ENCODE measurements at regions of chr1 and their contacts with region 1.

Region 1: DNA sequence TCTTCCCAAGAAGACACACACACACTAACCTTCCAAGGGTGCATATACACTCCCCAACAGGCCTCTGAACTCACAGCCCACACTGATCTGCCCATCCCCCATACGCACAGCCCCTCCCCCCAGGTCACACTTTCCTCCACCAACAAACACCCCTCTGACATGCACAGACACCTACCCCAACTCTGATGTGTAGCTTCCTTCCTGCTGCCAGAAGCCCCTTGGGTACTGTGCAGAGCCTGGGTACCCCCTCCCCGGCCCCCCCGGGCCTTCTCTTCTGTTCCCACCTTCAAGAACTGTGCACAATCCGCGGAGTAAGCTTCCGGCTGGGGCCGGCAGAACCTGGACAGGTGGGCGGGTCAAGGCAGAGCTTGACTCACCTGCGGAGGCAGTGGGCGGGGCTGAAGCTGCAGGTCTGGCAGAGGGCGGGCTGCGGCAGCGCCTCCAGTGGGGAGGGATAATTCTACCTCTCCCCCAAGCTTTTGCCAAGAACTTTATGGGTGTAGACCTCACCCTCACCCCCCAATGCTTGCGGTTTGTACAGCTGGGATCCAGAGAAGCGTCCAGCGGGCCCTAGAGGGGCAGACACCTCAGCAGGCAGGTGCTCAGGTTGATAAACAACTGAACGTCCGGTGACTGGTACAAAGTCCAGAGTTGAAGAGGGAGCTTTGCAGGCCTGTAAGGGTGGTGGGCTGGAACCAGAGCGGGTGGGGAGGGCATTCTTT is at the start of gene C1orf210:
- DNase-seq: peak; percentile 71 to 93
- H3K4me3 ChIP-seq: peak within 1 kb of the TSS; percentile 41 to 64 (median 60)
- H3K27ac ChIP-seq: peak within 1 kb of the TSS; percentile 7; the same call in 1 of the 2 replicates
- H3K4me1 ChIP-seq: peaks cover 0 to 15% (median 12%) of the 10 kb centered on the region in 4 experiments; a peak in 6 of 7 replicates
- H3K27me3 ChIP-seq: no peaks in the 10 kb centered on the region; a peak in 1 of 7 replicates
- CTCF ChIP-seq: peak; percentile 58 to 71 (median 68)
- EP300 ChIP-seq: no peak
- POLR2A ChIP-seq: no peak; a peak in 1 of 3 replicates
- RAD21 ChIP-seq: peak; percentile 38 to 40; a peak in 2 of 4 replicates
- total RNA-seq, gene C1orf210: 10.6 and 12.0 TPM in 2 replicates

Region 2: GRCh38 chr1:43238085-43238484 is 47.3 kb before region 1 on chr1:
- CTCF ChIA-PET with region 1: interaction called, 14 read pairs
- POLR2A ChIA-PET with region 1: no interaction called
- DNase-seq: peak; percentile 36 to 79
- H3K4me3 ChIP-seq: no peak overlapping the region
- H3K27ac ChIP-seq: no peak overlapping the region
- H3K4me1 ChIP-seq: no peaks in the 10 kb centered on the region
- H3K27me3 ChIP-seq: no peaks in the 10 kb centered on the region
- CTCF ChIP-seq: peak; percentile 57 to 97 (median 90)
- EP300 ChIP-seq: no peak
- POLR2A ChIP-seq: no peak
- RAD21 ChIP-seq: peak; percentile 98

Region 3: GRCh38 chr1:43274125-43274803 is 11.2 kb before region 1 on chr1:
- CTCF ChIA-PET with region 1: interaction called, 12 read pairs
- POLR2A ChIA-PET with region 1: interaction called, 31 read pairs
- DNase-seq: no peak
- H3K4me3 ChIP-seq: no peak overlapping the region
- H3K27ac ChIP-seq: no peak overlapping the region
- H3K4me1 ChIP-seq: peaks cover 0 to 11% (median 5%) of the 10 kb centered on the region in 4 experiments; a peak in 5 of 7 replicates
- H3K27me3 ChIP-seq: no peaks in the 10 kb centered on the region
- CTCF ChIP-seq: no peak
- EP300 ChIP-seq: no peak
- POLR2A ChIP-seq: no peak
- RAD21 ChIP-seq: no peak

Region 4: GRCh38 chr1:43304314-43304681 is 18.9 kb after region 1 on chr1:
- CTCF ChIA-PET with region 1: interaction called, 12 read pairs
- POLR2A ChIA-PET with region 1: interaction called, 3 read pairs
- DNase-seq: no peak
- H3K4me3 ChIP-seq: no peak overlapping the region
- H3K27ac ChIP-seq: no peak overlapping the region
- H3K4me1 ChIP-seq: peaks cover 0 to 2% (median 2%) of the 10 kb centered on the region in 4 experiments; a peak in 3 of 7 replicates
- H3K27me3 ChIP-seq: no peaks in the 10 kb centered on the region
- CTCF ChIP-seq: no peak
- EP300 ChIP-seq: no peak
- POLR2A ChIP-seq: no peak
- RAD21 ChIP-seq: no peak

Region 5: DNA sequence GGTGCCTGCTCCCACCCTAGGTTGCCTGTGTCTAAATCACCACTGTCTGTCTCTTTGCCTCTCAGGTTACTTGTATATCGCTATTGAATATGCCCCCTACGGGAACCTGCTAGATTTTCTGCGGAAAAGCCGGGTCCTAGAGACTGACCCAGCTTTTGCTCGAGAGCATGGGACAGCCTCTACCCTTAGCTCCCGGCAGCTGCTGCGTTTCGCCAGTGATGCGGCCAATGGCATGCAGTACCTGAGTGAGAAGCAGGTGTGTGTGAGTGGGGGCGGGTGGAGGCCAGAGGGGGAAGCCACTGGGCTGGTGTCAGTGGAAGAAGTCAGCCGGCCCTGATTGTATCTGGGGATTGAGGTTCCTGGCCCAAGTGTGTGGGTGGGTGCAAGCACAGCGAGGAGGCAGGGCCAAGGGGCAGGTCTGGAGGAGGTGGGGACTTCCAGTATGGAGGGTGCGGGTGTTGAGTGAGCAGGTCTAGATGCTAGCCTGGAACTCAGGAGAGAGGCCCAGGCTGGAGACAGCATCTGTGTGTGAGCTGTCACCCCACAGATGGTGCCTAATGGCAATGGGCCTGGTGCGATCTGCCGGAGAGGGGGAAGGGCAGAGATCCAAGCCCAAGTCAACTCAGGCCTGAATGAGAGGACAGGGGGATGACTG is 32.5 kb after region 1 on chr1:
- CTCF ChIA-PET with region 1: interaction called, 19 read pairs
- POLR2A ChIA-PET with region 1: interaction called, 4 read pairs
- DNase-seq: no peak
- H3K4me3 ChIP-seq: no peak overlapping the region
- H3K27ac ChIP-seq: no peak overlapping the region
- H3K4me1 ChIP-seq: peaks cover 0 to 5% (median 0%) of the 10 kb centered on the region in 4 experiments; a peak in 1 of 7 replicates
- H3K27me3 ChIP-seq: no peaks in the 10 kb centered on the region; a peak in 1 of 7 replicates
- CTCF ChIP-seq: no peak
- EP300 ChIP-seq: no peak
- POLR2A ChIP-seq: no peak
- RAD21 ChIP-seq: no peak

Region 6: DNA sequence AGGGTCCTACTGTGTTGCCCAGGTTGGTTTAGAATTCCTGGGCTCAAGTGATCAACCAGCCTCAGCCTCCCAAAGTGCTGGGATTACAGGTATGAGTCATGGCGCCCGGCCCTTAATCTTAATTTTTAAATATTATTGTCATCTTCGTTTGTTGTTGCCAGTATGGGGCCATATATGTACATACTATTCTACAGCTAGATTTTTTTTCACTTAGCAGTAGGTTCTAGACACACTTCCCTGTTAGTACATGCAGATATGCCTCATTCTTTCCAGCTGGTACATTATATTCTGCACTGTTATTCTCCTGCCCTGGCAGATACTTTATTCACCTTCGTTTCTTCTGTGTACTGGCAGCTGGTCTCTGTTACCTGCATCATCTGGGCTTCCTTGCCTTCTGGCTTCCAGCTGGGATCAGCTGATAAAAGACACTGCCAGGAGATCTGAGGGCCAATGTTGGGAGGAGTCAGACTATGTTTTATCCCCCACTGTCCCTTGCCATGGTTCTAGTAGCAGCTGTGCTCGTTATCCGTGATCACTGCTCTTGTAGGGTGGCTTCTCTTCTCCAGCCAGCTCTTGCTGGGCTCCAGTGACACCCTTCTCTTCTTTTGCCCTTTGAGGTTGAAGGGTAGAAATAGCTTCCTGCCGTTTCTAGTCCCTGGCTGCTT is 446.6 kb after region 1 on chr1:
- CTCF ChIA-PET with region 1: no interaction called
- POLR2A ChIA-PET with region 1: no interaction called
- DNase-seq: no peak
- H3K4me3 ChIP-seq: no peak overlapping the region
- H3K27ac ChIP-seq: no peak overlapping the region
- H3K4me1 ChIP-seq: no peaks in the 10 kb centered on the region
- H3K27me3 ChIP-seq: no peaks in the 10 kb centered on the region
- CTCF ChIP-seq: no peak
- EP300 ChIP-seq: no peak
- POLR2A ChIP-seq: no peak
- RAD21 ChIP-seq: no peak